ENCODE measurements at regions of chr9 and their contacts with region 1.

Region 1: GRCh38 chr9:101403516-101404285 is 5.0 kb downstream of the ZNF189 start:
- DNase-seq: no peak
- H3K4me3 ChIP-seq: no peak overlapping the region
- H3K27ac ChIP-seq: no peak overlapping the region
- H3K4me1 ChIP-seq: peaks cover 8 to 23% (median 15%) of the 10 kb centered on the region in 4 donors
- H3K27me3 ChIP-seq: no peaks in the 10 kb centered on the region
- CTCF ChIP-seq: no peak
- EP300 ChIP-seq: no peak
- POLR2A ChIP-seq: no peak

Region 2: DNA sequence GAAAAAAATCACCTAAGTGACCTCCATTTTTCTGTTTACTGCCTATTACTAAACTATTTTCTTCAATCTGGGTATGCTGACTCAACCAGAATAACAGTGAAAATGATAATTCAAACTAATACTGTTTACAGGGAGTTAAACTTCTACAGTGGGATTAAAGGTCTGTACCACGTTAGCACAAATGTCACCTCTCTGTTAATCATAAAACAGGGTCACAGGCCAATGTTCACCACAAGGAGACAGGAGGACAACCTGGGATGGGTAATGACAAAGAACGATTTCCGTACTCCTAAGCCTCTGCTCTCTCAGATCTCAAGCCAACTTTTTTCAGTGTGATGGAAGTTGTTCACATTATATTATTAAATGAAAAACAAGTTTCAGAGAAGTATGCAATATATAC is 29.5 kb after region 1 on chr9:
- in situ Hi-C with region 1: no loop called
- intact Hi-C with region 1: loop called (anchors 1 kb)
- DNase-seq: no peak
- H3K4me3 ChIP-seq: no peak overlapping the region
- H3K27ac ChIP-seq: no peak overlapping the region
- H3K4me1 ChIP-seq: no peaks in the 10 kb centered on the region
- H3K27me3 ChIP-seq: no peaks in the 10 kb centered on the region
- CTCF ChIP-seq: no peak
- EP300 ChIP-seq: no peak
- POLR2A ChIP-seq: no peak

Measured in transverse colon (tissue), 4 donors.